ENCODE measurements at regions of chr9 and their contacts with region 1.

Region 1: DNA sequence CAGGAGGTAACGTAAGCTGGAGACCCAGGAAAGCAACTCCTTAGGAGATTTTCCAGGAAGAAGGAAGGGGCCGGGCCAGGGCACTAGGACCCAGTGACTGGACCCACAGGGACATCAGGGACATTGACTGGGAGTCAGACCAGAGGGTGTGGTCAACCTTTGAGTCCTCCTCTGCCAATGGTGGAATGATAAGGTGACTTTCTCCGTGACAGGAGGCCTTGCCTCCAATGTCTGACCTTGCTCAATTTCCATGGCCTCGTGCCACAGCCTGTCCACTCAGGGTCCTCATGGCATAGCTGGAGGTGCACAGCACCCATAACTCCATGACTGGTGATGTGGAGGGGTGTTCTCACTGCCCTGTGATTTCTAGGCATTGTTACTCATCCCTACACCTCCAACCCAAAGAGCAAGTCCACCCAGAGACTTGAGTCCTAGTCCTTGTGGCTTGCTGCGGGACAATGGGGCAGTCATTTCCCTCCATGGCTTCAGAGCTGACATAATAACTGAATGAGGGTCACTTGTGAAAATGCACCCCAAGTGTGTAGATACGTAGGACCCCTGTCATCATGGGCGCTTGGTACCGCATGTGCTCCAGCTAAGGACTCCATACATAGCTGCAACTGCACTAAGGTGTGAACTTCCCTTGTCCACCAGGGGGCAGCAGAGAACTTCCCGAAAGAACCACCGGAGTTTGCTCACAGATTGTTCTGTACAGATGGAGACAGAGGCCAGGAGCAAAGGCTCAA is 4.1 kb upstream of the AMBP start:
- DNase-seq: peak; percentile 47 to 91
- H3K4me3 ChIP-seq: no peak overlapping the region
- H3K27ac ChIP-seq: no peak overlapping the region
- H3K4me1 ChIP-seq: no peaks in the 10 kb centered on the region
- H3K27me3 ChIP-seq: no peaks in the 10 kb centered on the region
- CTCF ChIP-seq: peak; percentile 72 to 87 (median 76)

Region 2: DNA sequence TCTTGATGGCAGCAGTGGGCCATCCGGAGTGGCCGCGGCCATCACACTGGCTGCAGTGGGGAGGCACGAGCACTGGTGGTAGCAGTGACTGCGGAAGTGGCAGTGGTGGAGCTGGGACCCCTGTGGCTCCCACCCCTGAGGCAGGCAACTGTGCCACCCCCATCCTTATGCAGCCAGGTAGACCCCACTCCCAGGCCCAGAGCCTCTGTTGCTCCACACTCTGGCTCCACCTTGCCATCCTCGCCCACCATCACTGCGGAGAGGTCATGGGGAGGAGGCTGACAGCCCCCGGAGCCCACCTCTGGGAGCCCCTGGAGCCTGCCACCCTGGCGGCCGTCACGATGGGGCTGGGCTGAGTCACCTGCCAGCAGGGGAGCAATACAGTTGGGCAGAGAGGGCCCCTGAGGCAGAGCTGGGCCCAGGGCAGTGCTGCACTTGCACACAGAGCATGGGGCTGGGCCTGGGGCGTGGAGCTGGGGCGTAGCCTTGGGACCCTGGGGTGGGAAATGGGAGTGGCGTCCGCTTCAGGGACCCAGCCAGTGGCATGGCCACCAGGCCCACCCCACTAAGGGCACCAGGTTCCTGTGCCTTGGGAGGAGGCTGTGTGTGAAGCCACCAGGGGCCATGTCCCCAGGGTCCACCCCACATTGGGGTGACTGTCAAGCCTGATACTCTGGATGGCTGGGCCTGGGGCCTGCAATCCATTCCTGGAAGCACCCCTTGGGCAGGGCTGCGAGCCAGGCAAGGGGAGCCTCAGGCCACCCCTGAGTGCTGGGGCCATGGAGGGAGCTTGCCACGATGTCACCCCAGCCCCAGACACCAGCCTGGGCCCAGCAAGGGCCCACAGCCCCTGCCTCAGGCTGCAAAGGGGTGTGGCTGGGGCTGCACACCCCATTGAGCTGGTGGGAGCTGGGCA is 11.7 kb before region 1 on chr9:
- intact Hi-C with region 1: no loop called
- DNase-seq: peak in 1 of 2 donors; percentile 44
- H3K4me3 ChIP-seq: no peak overlapping the region
- H3K27ac ChIP-seq: no peak overlapping the region
- H3K4me1 ChIP-seq: peaks cover 0 to 3% of the 10 kb centered on the region in 2 donors
- H3K27me3 ChIP-seq: no peaks in the 10 kb centered on the region
- CTCF ChIP-seq: no peak

Region 3: GRCh38 chr9:114291064-114291474 is 208.9 kb after region 1 on chr9:
- intact Hi-C with region 1: loop called (anchors 1 kb)
- DNase-seq: peak in 1 of 2 donors; percentile 86
- H3K4me3 ChIP-seq: no peak overlapping the region
- H3K27ac ChIP-seq: no peak overlapping the region
- H3K4me1 ChIP-seq: no peaks in the 10 kb centered on the region
- H3K27me3 ChIP-seq: no peaks in the 10 kb centered on the region
- CTCF ChIP-seq: peak; percentile 89 to 96 (median 93)

Region 4: GRCh38 chr9:114304416-114305188 is 222.4 kb after region 1 on chr9:
- intact Hi-C with region 1: loop called (anchors 1 kb)
- DNase-seq: peak in 1 of 2 donors; percentile 55
- H3K4me3 ChIP-seq: no peak overlapping the region
- H3K27ac ChIP-seq: no peak overlapping the region
- H3K4me1 ChIP-seq: peaks cover 0 to 2% of the 10 kb centered on the region in 2 donors
- H3K27me3 ChIP-seq: no peaks in the 10 kb centered on the region
- CTCF ChIP-seq: no peak

Measured in ascending aorta (tissue), 2 donors.